Psoas muscle (tissue), 8 donors: ENCODE measurements at regions of chr1 and their contacts with region 1.

Region 1: DNA sequence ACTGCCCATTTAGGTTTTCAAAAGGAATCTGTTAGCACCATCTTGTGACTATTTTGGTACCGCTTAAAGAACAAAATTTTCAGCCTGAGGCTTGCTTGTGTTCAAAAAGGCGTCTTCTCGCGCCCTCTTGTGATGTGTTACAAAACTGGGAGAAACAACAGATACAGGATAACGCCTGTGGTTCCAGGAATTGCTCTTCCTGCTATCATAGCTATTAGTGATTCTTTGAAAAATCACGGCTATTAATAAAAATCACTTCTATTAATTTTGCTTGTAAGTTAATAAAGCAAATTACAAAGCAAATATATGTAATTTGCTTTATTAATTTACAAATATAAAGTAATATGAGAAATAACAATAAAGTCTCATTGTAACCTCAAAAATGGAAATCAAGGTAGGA is 82.2 kb upstream of the ABCD3 start:
- DNase-seq: peak; percentile 52 to 61
- ATAC-seq: peak; percentile 89 to 99 (median 93)
- H3K4me3 ChIP-seq: no peak overlapping the region
- H3K27ac ChIP-seq: no peak overlapping the region
- H3K4me1 ChIP-seq: peaks cover 8% of the 10 kb centered on the region
- H3K27me3 ChIP-seq: no peaks in the 10 kb centered on the region
- CTCF ChIP-seq: peak; percentile 88

Region 2: GRCh38 chr1:94025383-94026340 is 310.3 kb before region 1 on chr1:
- intact Hi-C with region 1: loop called in 1 of 2 experiments (anchors 1 kb)
- DNase-seq: no peak
- ATAC-seq: peak in 3 of 4 donors; percentile 50 to 71 (median 55)
- H3K4me3 ChIP-seq: no peak overlapping the region
- H3K27ac ChIP-seq: no peak overlapping the region
- H3K4me1 ChIP-seq: peaks cover 4% of the 10 kb centered on the region
- H3K27me3 ChIP-seq: no peaks in the 10 kb centered on the region
- CTCF ChIP-seq: peak; percentile 81

Region 3: GRCh38 chr1:94199398-94199797 is 136.6 kb before region 1 on chr1:
- intact Hi-C with region 1: no loop called
- DNase-seq: no peak
- ATAC-seq: no peak
- H3K4me3 ChIP-seq: no peak overlapping the region
- H3K27ac ChIP-seq: no peak overlapping the region
- H3K4me1 ChIP-seq: no peaks in the 10 kb centered on the region
- H3K27me3 ChIP-seq: no peaks in the 10 kb centered on the region
- CTCF ChIP-seq: no peak

Region 4: DNA sequence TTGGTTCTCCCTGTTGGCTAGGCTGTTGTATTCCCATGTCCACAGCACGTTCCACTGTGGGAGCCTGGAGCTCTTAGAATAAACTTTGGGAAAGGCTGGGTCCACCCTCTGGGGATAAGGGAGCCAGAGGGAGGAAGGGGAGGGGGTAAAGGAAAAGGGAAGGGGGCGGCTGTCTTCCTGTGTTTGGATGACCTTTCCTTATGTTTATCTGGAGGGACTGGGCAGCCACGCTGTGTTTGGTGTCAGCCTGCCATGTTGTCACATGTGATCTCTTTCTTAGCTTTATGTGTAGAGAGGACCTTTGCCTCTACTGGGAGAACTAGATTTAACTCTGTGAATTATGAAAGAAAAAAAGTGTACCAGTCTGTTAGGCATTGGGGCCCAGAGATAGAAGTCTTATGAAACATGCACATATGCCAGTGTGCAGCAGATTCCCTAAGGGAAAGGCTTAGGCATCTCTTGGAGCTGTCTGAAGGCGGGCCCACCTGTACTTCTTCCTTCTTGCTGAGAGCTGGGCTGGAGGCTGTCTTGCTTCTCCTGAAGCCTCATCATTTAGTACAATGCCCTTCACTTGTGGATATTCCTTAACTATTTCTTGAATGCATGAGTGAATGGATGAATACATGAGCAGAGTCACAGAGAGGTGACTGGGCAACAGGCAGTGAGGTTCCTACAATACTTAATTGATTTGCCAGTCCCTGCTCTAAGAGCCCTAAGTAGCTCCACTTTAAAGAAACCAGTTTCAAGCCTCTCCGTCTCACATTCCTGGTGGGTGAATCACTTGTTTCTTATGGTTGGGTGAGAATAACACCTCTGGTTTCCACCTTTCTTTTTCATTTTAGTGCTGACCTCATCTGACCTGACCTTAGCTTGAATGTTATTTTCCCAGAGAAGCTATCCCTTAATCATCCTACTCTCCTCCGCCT is 36.1 kb before region 1 on chr1:
- intact Hi-C with region 1: no loop called
- DNase-seq: no peak
- ATAC-seq: peak in 3 of 4 donors; percentile 19 to 42 (median 40)
- H3K4me3 ChIP-seq: no peak overlapping the region
- H3K27ac ChIP-seq: peak overlapping the region; percentile 50
- H3K4me1 ChIP-seq: peaks cover 24% of the 10 kb centered on the region
- H3K27me3 ChIP-seq: no peaks in the 10 kb centered on the region
- CTCF ChIP-seq: no peak

Region 5: DNA sequence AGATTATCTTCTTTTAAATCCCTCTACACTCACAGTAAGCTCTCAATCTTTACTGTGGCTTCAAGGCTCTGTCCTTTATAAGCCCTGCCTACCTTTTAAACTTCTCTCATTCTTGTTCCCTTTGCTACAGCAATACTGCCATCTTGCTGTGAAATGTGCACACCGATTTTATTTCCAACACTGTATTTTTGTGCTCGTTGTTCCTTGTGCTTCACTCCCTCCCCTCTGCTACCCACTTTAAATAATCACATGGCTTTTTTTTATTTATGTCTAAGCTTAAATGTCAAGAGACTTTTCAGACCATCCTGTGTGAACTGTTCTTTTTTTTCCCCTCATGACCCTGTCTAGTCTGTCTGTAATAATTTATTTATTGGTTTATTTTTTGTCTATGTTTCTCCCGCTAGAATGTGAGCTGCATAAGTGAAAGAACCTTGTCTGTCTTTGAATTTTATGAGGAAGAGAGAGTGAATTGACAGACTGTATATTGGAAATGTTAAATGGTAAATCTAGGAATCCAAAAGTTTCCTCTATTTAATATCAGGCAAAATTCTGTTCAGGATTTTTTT is 127.9 kb after region 1 on chr1:
- intact Hi-C with region 1: loop called in 1 of 2 experiments (anchors 1 kb)
- DNase-seq: no peak
- ATAC-seq: peak; percentile 56 to 90 (median 67)
- H3K4me3 ChIP-seq: no peak overlapping the region
- H3K27ac ChIP-seq: no peak overlapping the region
- H3K4me1 ChIP-seq: no peaks in the 10 kb centered on the region
- H3K27me3 ChIP-seq: no peaks in the 10 kb centered on the region
- CTCF ChIP-seq: peak; percentile 65

Region 6: GRCh38 chr1:94614996-94615395 is 279.0 kb after region 1 on chr1:
- intact Hi-C with region 1: no loop called
- DNase-seq: no peak
- ATAC-seq: no peak
- H3K4me3 ChIP-seq: no peak overlapping the region
- H3K27ac ChIP-seq: no peak overlapping the region
- H3K4me1 ChIP-seq: no peaks in the 10 kb centered on the region
- H3K27me3 ChIP-seq: no peaks in the 10 kb centered on the region
- CTCF ChIP-seq: no peak

Region 7: DNA sequence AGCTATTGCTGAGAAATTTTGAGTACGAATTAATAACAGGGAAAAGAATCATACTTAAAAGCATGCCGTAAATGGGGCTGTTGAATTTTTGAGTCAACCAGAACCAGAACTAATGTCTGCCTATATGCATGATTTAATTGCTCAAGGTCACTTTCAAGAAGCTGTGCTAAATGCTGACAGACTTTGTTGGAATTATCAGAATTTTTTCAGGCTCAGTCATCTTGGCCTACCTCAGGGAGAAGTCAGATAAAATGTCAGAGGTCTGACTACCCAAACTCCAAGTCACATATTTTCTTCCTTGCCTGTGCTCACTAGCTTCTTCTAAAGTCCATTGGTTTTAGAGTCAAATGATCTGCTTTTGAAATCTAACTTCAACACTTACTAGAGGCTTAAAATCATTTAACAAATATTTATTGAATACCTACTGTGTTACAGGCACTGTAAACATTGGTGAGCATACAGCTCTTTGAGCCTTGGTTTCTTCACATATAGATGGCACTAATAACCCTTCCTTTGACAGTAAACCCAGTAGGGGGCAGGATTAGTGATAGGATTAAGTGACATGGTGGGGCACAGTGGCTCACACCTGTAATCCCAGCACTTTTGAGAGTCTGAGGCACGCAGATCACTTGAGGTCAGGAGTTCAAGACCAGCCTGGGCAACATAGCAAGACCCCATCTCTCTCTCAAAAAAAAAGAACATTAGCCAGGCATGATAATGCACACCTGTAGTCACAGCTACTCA is 363.0 kb after region 1 on chr1:
- intact Hi-C with region 1: no loop called
- DNase-seq: no peak
- ATAC-seq: peak in 1 of 4 donors; percentile 40
- H3K4me3 ChIP-seq: no peak overlapping the region
- H3K27ac ChIP-seq: no peak overlapping the region
- H3K4me1 ChIP-seq: no peaks in the 10 kb centered on the region
- H3K27me3 ChIP-seq: no peaks in the 10 kb centered on the region
- CTCF ChIP-seq: no peak